PC-3 (cell line): ENCODE measurements at regions of chr1 and their contacts with region 1.

Region 1: GRCh38 chr1:228131766-228132165 is 8.3 kb upstream of the GUK1 start:
- DNase-seq: peak; percentile 58
- ATAC-seq: no peak
- H3K4me3 ChIP-seq: peak overlapping the region; percentile 65
- H3K27ac ChIP-seq: peak overlapping the region; percentile 54
- H3K4me1 ChIP-seq: peaks cover 12% of the 10 kb centered on the region
- H3K27me3 ChIP-seq: no peaks in the 10 kb centered on the region
- CTCF ChIP-seq: no peak

Region 2: DNA sequence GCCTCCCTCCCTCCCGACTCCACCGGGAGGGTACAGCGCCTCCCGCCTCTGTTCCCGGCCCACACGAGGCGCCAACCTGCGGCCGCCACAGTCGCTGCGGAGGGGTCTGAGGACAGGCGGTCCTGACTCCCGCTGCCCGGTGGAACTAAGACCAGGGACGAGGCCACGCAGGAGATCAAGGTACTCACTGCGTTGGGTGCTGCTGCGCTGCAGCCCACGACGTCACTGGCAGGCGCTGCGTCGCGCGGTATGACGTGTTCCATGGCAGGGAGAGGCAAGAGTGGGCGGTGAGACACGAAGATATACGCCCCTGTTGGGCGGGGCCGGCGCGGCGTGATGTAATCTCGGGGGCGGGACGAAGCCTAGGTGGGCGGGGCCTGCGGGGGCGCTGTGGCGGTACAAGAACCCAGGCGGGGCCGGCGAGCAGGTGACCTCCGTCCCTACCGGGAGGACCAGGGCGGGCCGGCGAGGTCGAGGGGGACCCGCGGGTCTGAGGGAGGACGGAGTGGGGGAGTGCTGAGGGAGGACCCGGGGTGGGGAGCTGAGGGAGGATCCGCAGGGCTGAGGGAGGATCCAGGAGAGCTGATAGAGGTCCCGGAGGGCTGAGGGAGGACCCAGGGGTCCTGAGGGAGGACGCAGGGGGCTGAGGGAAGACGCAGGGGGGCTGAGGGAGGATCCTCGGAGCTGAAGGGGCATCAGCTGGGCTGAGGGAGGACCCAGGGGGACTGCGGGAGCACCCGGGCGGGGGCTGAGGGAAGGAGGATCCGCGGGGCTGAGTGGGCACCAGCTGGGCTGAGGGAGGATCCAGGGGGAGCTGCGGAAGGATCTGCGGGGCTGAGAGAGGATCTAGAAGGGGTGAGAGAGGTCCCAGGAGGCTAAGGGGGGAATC is 22.4 kb before region 1 on chr1 and contains the start of gene MRPL55:
- CTCF ChIA-PET with region 1: interaction called, 10 read pairs
- POLR2A ChIA-PET with region 1: no interaction called
- intact Hi-C with region 1: no loop called
- DNase-seq: peak; percentile 100
- ATAC-seq: peak; percentile 86
- H3K4me3 ChIP-seq: peak within 1 kb of the TSS; percentile 87
- H3K27ac ChIP-seq: peak within 1 kb of the TSS; percentile 31
- H3K4me1 ChIP-seq: peaks cover 19% of the 10 kb centered on the region
- H3K27me3 ChIP-seq: no peaks in the 10 kb centered on the region
- CTCF ChIP-seq: peak; percentile 37; the same call in 1 of the 2 replicates
- total RNA-seq, gene MRPL55: 343 and 375 TPM in 2 replicates

Region 3: DNA sequence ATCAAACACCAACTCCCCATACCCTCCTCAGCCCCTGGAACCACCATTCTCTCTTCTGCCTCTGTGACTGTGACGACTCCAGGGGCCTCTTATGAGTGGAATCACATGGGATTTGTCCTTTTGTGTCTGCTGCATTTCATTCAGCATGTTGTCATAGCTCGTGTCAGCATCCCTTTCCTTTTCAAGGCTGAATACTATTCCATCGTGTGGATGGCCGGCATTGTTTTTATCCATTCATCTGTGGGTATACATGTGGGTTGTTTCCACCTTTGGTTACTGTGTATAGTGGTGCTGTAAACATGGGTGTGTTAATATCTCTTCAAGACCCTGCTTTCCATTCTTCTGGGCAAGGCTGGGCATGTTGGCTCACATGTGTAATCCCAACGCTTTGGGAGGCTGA is 59.0 kb after region 1 on chr1:
- CTCF ChIA-PET with region 1: no interaction called
- POLR2A ChIA-PET with region 1: no interaction called
- intact Hi-C with region 1: loop called (anchors 1 kb)
- DNase-seq: no peak
- ATAC-seq: no peak
- H3K4me3 ChIP-seq: no peak overlapping the region
- H3K27ac ChIP-seq: no peak overlapping the region
- H3K4me1 ChIP-seq: peaks cover 8% of the 10 kb centered on the region; the same call in 1 of the 2 replicates
- H3K27me3 ChIP-seq: no peaks in the 10 kb centered on the region
- CTCF ChIP-seq: no peak

Region 4: DNA sequence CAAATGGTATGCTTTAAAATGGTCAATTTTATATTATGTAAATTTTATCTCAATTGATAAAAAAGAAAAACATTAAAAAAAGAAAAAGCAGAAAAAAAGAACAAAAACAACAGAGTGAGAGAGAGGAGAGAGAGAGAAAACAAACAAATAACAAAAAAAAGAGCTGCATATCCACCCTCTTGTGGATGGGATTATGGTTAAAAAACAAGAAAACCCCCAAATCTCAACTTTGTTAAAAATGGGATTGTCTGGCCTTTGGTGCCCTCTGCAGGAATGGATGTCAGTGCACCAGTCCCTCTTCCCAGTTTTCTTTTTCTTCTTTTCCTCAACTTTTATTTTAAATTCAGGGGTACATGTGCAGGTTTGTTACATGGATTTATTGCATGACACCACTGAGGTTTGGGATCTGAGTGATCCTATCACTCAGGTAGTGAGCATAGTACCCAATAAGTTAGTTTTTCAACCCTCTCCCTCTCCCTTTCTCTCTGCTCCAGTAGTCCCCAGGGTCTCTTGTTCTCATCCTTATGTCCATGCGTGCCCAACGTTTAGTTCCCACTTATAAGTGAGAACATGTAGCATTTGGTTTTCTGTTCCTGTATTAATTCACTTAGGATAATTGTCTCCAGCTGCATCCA is 383.6 kb after region 1 on chr1:
- CTCF ChIA-PET with region 1: no interaction called
- POLR2A ChIA-PET with region 1: no interaction called
- intact Hi-C with region 1: loop called (anchors 1 kb)
- DNase-seq: peak; percentile 68
- ATAC-seq: peak; percentile 59
- H3K4me3 ChIP-seq: no peak overlapping the region
- H3K27ac ChIP-seq: no peak overlapping the region
- H3K4me1 ChIP-seq: no peaks in the 10 kb centered on the region
- H3K27me3 ChIP-seq: peaks cover 42% of the 10 kb centered on the region
- CTCF ChIP-seq: peak; percentile 90